Activated CD8-positive, alpha-beta T cell treated with anti-CD3 and anti-CD28 coated beads for 36 hours (primary cell): ENCODE measurements at regions of chr12 and their contacts with region 1.

Region 1: GRCh38 chr12:14239350-14239934 is 126.0 kb upstream of the ATF7IP start:
- DNase-seq: peak; percentile 63
- ATAC-seq: peak; percentile 81
- H3K4me3 Mint-ChIP-seq: peak overlapping the region; percentile 72
- H3K27ac Mint-ChIP-seq: peak overlapping the region; percentile 87
- H3K4me1 Mint-ChIP-seq: peaks cover 19% of the 10 kb centered on the region
- H3K27me3 Mint-ChIP-seq: no peaks in the 10 kb centered on the region
- CTCF ChIP-seq: no peak

Region 2: GRCh38 chr12:14007639-14008038 is 231.8 kb before region 1 on chr12:
- CTCF ChIA-PET with region 1: no interaction called
- POLR2A ChIA-PET with region 1: no interaction called
- intact Hi-C with region 1: no loop called
- DNase-seq: no peak
- ATAC-seq: no peak
- H3K4me3 Mint-ChIP-seq: no peak overlapping the region
- H3K27ac Mint-ChIP-seq: no peak overlapping the region
- H3K4me1 Mint-ChIP-seq: no peaks in the 10 kb centered on the region
- H3K27me3 Mint-ChIP-seq: peaks cover 3% of the 10 kb centered on the region
- CTCF ChIP-seq: no peak

Region 3: GRCh38 chr12:14225064-14225463 is 14.4 kb before region 1 on chr12:
- CTCF ChIA-PET with region 1: interaction called, 20 read pairs
- POLR2A ChIA-PET with region 1: no interaction called
- intact Hi-C with region 1: no loop called
- DNase-seq: no peak
- ATAC-seq: no peak
- H3K4me3 Mint-ChIP-seq: no peak overlapping the region
- H3K27ac Mint-ChIP-seq: no peak overlapping the region
- H3K4me1 Mint-ChIP-seq: peaks cover 11% of the 10 kb centered on the region
- H3K27me3 Mint-ChIP-seq: peaks cover 3% of the 10 kb centered on the region
- CTCF ChIP-seq: no peak

Region 4: DNA sequence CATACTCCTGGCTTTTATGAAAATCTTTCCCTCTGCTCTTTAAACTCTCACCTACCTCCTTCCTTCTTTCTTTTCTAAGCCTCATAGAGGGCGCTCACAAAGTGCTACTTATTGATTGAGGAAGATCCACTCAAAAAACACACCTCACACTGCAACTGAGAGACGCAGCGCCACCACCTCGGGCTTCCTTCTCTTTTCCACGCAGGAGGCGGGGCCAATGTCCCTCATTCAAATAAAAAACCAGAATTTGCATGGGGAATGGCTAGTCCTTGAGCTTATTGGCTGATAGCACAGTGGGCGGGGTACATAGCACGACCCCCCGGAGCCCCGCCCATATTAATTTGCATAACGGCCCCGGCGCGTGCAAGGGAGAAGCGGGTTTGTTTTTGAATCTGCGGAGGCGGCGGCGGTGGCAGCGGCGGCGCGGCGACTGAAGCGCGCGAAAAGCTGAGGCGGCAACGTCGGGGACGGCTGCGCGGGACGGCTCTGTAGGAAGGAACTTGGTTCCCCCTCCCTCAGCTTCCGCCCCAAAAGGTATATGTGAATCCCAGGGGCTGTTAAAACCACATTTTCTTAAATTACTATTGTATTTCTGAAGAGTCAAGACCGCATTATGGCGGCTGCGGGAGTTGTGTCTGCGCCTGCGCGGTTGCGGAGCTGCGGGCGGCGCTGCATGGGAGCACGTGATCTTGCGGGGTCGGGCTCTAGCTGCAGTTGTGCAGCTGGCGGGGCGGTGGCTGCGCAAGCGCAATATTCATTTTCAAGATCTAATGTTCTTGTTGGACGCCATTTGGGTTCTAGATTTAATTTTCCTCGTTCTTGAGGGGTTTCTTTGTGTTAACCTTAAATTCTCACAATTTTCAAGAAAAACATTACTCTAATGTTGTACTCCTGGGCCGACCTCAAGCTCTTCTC is 126.1 kb after region 1 on chr12 and contains the start of gene ATF7IP:
- CTCF ChIA-PET with region 1: interaction called, 30 read pairs
- POLR2A ChIA-PET with region 1: interaction called, 5 read pairs
- intact Hi-C with region 1: loop called (anchors 5 kb)
- DNase-seq: peak; percentile 98
- ATAC-seq: peak; percentile 88
- H3K4me3 Mint-ChIP-seq: peak within 1 kb of the TSS; percentile 75
- H3K27ac Mint-ChIP-seq: peak within 1 kb of the TSS; percentile 97
- H3K4me1 Mint-ChIP-seq: peaks cover 31% of the 10 kb centered on the region
- H3K27me3 Mint-ChIP-seq: no peaks in the 10 kb centered on the region
- CTCF ChIP-seq: peak; percentile 32
- total RNA-seq, gene ATF7IP: 101 to 107 TPM

Region 5: DNA sequence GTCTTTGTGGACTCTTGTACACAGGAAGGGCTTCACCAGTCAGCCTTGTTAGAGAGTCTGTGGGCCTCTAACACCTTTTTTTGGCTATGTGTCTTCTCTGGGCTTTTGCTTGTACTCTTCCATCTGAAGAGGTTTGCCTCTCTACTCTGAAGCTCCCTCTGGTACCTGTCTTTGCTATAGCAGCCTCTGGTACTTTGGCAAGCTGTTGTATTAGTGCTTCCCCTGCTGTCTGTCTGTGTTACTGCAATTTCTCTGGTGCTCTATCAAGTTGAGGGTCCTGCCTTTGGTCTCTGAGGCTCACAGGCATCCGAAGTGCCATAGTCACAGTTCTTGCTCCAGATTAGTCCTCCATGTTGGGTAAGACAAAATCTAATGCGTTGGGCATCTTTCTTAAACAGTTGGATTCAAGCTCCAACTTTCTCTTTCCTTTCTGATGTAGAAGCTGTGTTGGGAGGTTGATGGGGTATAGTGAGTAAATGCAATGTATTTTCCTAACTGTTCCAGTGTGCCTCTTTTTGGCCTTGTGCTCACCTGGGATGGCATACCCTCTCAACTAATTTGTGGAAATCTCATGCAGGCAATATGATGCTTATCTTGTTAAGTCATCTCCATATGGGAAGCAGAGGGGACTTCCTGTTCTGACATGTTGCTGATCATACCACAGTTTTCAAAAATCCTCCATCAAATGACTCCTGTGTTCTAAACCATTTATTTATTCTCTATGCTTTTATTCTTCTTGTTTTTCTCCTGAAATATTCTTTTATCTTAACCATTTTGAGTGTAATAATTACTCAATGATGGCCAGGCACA is 214.9 kb after region 1 on chr12:
- CTCF ChIA-PET with region 1: interaction called, 16 read pairs
- POLR2A ChIA-PET with region 1: no interaction called
- intact Hi-C with region 1: no loop called
- DNase-seq: peak; percentile 49
- ATAC-seq: peak; percentile 96
- H3K4me3 Mint-ChIP-seq: no peak overlapping the region
- H3K27ac Mint-ChIP-seq: peak overlapping the region; percentile 75
- H3K4me1 Mint-ChIP-seq: peaks cover 60% of the 10 kb centered on the region
- H3K27me3 Mint-ChIP-seq: no peaks in the 10 kb centered on the region
- CTCF ChIP-seq: peak; percentile 68

Region 6: GRCh38 chr12:14664510-14664909 is 425.1 kb after region 1 on chr12:
- CTCF ChIA-PET with region 1: interaction called, 6 read pairs
- POLR2A ChIA-PET with region 1: no interaction called
- intact Hi-C with region 1: loop called (anchors 2 kb)
- DNase-seq: peak; percentile 57
- ATAC-seq: peak; percentile 65
- H3K4me3 Mint-ChIP-seq: no peak overlapping the region
- H3K27ac Mint-ChIP-seq: no peak overlapping the region
- H3K4me1 Mint-ChIP-seq: peaks cover 6% of the 10 kb centered on the region
- H3K27me3 Mint-ChIP-seq: peaks cover 5% of the 10 kb centered on the region
- CTCF ChIP-seq: peak; percentile 80